Colonic mucosa (tissue), 4 donors: ENCODE measurements at regions of chr7 and their contacts with region 1.

Region 1: GRCh38 chr7:15561835-15562234 is at the start of gene AGMO:
- DNase-seq: peak; percentile 87
- H3K4me3 ChIP-seq: no peak within 1 kb of the TSS
- H3K27ac ChIP-seq: no peak within 1 kb of the TSS
- H3K4me1 ChIP-seq: no peaks in the 10 kb centered on the region
- H3K27me3 ChIP-seq: no peaks in the 10 kb centered on the region
- CTCF ChIP-seq: no peak
- total RNA-seq, gene AGMO: 0.37 to 0.47 TPM

Region 2: DNA sequence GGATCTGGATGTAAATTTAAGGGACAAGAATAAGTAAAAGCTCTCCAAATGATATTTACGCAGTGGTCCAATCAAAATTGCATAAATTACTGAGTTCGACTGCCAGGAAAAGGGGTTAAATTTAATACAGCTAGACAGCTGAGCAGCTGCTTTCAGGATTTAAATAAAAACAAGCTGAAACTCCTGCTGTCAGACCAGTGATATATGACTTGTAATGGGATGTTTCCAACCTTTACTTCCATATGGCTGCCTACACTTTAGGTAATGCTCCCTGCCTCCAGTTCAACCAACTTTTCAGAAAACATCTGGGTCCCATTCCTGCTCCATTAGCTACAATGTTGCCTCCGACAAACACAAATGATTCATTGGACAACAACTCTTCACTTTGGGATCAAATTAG is 333.0 kb before region 1 on chr7:
- intact Hi-C with region 1: no loop called
- DNase-seq: no peak
- H3K4me3 ChIP-seq: no peak overlapping the region
- H3K27ac ChIP-seq: no peak overlapping the region
- H3K4me1 ChIP-seq: no peaks in the 10 kb centered on the region
- H3K27me3 ChIP-seq: no peaks in the 10 kb centered on the region
- CTCF ChIP-seq: no peak

Region 3: GRCh38 chr7:16062269-16062668 is 500.4 kb after region 1 on chr7:
- intact Hi-C with region 1: loop called (anchors 10 kb)
- DNase-seq: no peak
- H3K4me3 ChIP-seq: no peak overlapping the region
- H3K27ac ChIP-seq: no peak overlapping the region
- H3K4me1 ChIP-seq: no peaks in the 10 kb centered on the region
- H3K27me3 ChIP-seq: no peaks in the 10 kb centered on the region
- CTCF ChIP-seq: no peak